Prostate gland (tissue), 2 donors: ENCODE measurements at regions of chr3 and their contacts with region 1.

Region 1: GRCh38 chr3:180594631-180595558 is 7.1 kb upstream of the TTC14 start:
- DNase-seq: no peak
- H3K4me3 ChIP-seq: no peak overlapping the region
- H3K27ac ChIP-seq: no peak overlapping the region
- H3K4me1 ChIP-seq: no peaks in the 10 kb centered on the region
- H3K27me3 ChIP-seq: no peaks in the 10 kb centered on the region
- CTCF ChIP-seq: peak in 1 of 4 experiments; percentile 34
- POLR2A ChIP-seq: no peak

Region 2: GRCh38 chr3:179811321-179812095 is 783.4 kb before region 1 on chr3:
- intact Hi-C with region 1: loop called (anchors 10 kb)
- DNase-seq: peak; percentile 25
- H3K4me3 ChIP-seq: no peak overlapping the region
- H3K27ac ChIP-seq: no peak overlapping the region
- H3K4me1 ChIP-seq: no peaks in the 10 kb centered on the region
- H3K27me3 ChIP-seq: no peaks in the 10 kb centered on the region
- CTCF ChIP-seq: peak in 3 of 4 experiments; percentile 34 to 49 (median 38)
- POLR2A ChIP-seq: no peak

Region 3: DNA sequence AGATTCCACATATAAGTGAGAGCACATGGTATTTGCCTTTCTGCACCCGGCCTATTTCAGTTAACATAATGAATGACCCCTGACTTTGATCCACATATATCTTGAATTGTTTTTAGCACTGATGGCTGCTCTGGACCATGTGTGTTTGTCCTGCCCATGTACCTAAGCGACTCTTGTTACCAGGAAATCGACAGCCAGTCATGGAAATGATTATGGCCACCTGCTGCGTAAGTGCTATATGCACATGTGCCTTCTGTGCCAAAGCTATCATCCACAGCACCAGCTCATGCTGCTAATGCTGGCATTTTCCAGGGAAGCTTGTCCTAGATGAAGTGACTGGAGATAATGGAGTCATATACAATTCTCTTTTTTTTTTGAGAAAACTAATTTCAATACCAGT is 661.8 kb before region 1 on chr3:
- intact Hi-C with region 1: loop called (anchors 5 kb)
- DNase-seq: no peak
- H3K4me3 ChIP-seq: no peak overlapping the region
- H3K27ac ChIP-seq: no peak overlapping the region
- H3K4me1 ChIP-seq: no peaks in the 10 kb centered on the region
- H3K27me3 ChIP-seq: no peaks in the 10 kb centered on the region
- CTCF ChIP-seq: no peak
- POLR2A ChIP-seq: no peak

Region 4: GRCh38 chr3:180163719-180164118 is 431.2 kb before region 1 on chr3:
- intact Hi-C with region 1: no loop called
- DNase-seq: no peak
- H3K4me3 ChIP-seq: no peak overlapping the region
- H3K27ac ChIP-seq: no peak overlapping the region
- H3K4me1 ChIP-seq: no peaks in the 10 kb centered on the region
- H3K27me3 ChIP-seq: no peaks in the 10 kb centered on the region
- CTCF ChIP-seq: no peak
- POLR2A ChIP-seq: no peak